Cardiac septum (tissue), 1 donor: ENCODE measurements at regions of chr11 and their contacts with region 1.

Region 1: DNA sequence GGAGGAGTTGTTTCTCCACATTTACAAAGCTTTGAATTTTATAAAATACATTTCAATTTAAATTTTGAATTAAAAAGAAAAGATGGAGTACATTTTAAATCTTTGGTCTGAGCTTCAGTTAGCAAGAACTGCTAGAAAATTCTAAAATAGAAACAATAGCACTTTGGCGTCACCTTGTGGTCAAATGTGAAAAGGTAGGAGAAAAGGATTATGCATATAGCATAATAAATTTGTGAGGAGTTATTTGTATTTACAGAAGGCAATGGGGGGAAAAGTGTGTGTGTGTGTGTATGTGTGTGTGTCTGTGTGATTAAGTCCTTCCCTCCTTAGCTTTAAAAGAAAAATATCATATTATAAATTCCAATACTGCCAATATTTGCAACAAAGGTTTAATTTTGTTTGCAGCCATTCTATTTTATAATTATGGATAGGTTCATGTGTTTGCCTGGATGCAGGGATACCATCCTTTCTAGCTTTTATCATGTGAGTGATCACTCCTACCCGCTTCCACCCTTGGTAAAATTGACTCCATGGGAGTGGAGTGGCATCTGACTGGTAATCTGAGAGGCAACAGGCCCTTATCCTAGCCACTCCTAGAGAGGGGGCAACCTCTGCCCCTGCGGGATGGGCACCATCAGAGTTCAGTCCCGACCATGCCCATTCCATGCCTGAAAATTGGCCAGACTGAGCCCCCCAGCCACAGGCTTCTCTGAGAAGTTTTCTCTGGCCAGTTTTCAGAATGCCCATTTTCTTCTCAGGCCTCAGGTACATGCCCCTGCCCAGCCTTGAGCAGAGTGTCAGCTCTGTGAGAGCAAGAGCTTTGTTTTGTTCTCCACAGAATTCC is 13.6 kb upstream of the LGR4 start:
- DNase-seq: no peak

Region 2: DNA sequence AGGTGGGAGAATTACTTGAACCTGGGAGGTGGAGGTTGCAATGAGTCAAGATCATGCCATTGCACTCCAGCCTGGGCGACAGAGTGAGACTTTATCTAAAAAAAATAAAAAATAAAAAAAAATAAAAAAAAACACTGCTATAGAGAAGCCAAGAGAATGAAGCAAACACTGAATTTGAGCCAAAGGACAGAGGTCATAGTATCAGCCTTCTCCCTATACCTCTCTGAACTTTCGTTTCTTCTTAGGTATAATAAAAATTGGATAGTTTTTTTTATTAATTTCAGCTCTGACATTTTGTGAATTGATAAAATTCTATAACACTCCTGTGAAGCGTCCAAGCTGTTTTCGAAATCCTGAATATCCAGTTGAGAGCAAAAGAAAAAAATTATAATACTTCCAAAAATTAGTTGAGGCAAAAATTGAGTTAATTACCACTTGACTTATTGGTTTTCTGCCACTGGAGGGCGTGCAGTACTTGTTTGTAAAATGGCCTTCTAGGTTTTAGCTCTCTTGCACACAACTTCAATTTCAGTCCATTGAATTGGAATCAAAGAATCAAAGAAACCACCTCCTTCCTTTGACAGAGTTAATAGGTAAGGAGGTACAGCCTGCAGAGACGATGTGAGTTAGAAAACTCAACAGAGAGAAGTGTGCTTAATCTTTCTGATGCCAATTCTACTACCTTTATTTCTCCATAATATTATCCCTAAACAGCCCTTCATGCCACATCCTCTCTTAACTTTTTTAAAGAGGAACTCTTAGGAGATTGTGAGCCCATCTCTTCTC is 302.3 kb before region 1 on chr11:
- intact Hi-C with region 1: loop called (anchors 2 kb)
- DNase-seq: no peak

Region 3: GRCh38 chr11:27201454-27202236 is 284.5 kb before region 1 on chr11:
- intact Hi-C with region 1: loop called (anchors 5 kb)
- DNase-seq: no peak

Region 4: DNA sequence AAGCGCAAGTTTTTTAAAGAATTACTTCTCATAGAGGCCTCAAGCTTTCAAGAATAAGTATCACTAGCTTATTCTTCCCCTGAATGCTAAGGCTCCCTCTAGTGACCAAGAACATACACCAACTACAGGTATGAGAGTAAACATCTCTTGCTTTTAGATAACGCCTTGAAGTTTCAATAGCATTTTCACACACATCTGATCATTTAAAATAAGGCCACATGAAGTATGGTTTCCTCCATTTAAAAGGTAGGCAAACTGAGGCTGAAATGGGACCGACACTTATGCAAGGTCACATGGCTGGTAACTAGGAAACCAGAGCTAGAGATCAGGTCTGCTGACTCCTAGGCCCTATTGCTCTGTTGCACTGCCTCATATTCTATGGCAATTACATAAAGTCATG is 189.7 kb before region 1 on chr11:
- intact Hi-C with region 1: loop called (anchors 10 kb)
- DNase-seq: no peak